ENCODE measurements at regions of chr20 and their contacts with region 1.

Region 1: GRCh38 chr20:51595058-51595532 is 52.6 kb upstream of the NFATC2 start:
- DNase-seq: peak; percentile 45 to 75 (median 68)
- ATAC-seq: peak; percentile 95
- H3K4me3 ChIP-seq: no peak overlapping the region
- H3K4me3 Mint-ChIP-seq: peak overlapping the region; percentile 53 to 76 (median 66)
- H3K27ac ChIP-seq: no peak overlapping the region
- H3K27ac Mint-ChIP-seq: peak overlapping the region; percentile 14 to 93 (median 69)
- H3K4me1 ChIP-seq: no peaks in the 10 kb centered on the region
- H3K4me1 Mint-ChIP-seq: peaks cover 8 to 32% (median 13%) of the 10 kb centered on the region in 7 donors
- H3K27me3 ChIP-seq: no peaks in the 10 kb centered on the region
- H3K27me3 Mint-ChIP-seq: peaks cover 0 to 9% (median 0%) of the 10 kb centered on the region in 5 donors

Region 2: DNA sequence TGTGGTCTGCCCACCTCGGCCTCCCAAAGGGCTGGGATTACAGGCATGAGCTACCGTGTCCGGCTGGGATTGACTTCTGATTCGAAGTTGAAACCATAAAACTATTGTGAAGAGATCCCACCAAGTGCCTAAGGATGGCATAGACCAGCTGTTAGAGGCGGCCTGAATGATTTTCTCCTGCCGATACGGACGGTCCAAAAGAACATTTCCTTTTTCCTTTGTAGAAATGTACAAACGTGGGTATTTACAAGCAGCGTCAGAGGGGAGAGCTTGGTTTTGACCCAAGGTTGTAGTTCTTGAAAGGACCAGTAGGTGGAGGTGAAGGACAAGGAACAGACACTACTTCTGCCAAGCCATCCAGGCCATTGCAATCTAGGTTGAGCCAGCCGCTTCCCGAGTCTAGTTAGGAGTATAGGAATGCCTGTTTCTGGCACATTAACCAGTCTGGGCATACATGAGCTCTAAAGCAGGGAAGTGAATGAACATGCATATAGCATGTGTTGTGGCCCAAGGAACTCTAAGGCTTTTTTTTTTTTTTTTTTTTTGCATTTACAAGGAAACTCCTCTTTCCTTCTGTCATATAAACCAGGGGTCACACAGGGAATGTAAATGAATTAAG is 607.4 kb before region 1 on chr20:
- CTCF ChIA-PET with region 1: interaction called, 5 read pairs
- POLR2A ChIA-PET with region 1: no interaction called
- intact Hi-C with region 1: loop called (anchors 1 kb)
- DNase-seq: peak; percentile 23 to 77 (median 66)
- ATAC-seq: peak; percentile 92
- H3K4me3 ChIP-seq: no peak overlapping the region
- H3K4me3 Mint-ChIP-seq: no peak overlapping the region
- H3K27ac ChIP-seq: no peak overlapping the region
- H3K27ac Mint-ChIP-seq: peak overlapping the region in 1 of 9 donors; percentile 43
- H3K4me1 ChIP-seq: no peaks in the 10 kb centered on the region
- H3K4me1 Mint-ChIP-seq: peaks cover 0 to 6% (median 0%) of the 10 kb centered on the region in 7 donors
- H3K27me3 ChIP-seq: peaks cover 0 to 3% of the 10 kb centered on the region in 2 donors
- H3K27me3 Mint-ChIP-seq: peaks cover 18 to 31% (median 25%) of the 10 kb centered on the region in 5 donors

Region 3: DNA sequence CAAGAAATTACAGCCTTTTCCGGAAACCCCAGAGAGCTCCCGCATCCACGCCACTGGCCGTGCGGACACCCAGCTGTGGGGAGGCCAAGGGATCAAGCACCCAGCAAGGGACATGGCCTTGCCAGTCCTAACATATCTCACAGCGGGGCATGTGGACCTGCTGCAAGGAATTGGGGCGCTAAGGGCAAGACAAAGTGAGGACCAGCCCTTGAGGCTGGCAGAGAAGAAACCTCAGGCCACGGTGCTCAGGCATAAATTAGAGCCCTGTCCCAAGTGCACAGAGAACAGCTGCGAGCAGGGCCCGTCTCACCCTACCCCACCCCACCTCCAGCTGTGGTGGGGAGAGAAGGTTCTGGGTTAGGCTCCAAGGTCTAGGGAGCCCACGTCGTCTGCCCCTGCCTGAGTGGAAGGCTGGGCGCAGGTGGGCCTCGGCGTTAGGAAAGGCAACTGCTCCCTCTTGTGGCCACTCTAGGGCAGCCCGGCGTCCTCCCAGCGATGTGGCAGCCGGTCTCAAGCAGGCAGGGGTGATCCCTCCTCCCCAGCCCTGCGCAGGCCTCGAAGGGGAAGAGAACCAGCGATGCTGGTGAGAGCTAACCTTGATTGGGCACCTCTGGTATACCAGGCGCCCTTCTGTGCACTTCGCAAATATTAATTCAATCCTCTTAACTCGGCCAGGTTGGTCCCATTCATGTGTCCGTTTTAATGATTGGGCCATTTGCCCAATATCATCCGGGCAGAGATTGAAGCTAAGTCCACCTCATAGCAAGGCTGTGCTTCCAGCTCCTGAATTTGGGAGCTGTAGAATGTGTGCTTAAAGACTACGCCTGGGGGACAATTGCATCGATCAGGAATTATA is 288.4 kb before region 1 on chr20:
- CTCF ChIA-PET with region 1: interaction called, 4 read pairs
- POLR2A ChIA-PET with region 1: no interaction called
- intact Hi-C with region 1: loop called in 1 of 2 experiments (anchors 1 kb)
- DNase-seq: peak; percentile 39 to 74 (median 53)
- ATAC-seq: peak; percentile 87
- H3K4me3 ChIP-seq: no peak overlapping the region
- H3K4me3 Mint-ChIP-seq: no peak overlapping the region
- H3K27ac ChIP-seq: no peak overlapping the region
- H3K27ac Mint-ChIP-seq: no peak overlapping the region
- H3K4me1 ChIP-seq: peaks cover 0 to 4% of the 10 kb centered on the region in 2 donors
- H3K4me1 Mint-ChIP-seq: peaks cover 0 to 5% (median 0%) of the 10 kb centered on the region in 7 donors
- H3K27me3 ChIP-seq: no peaks in the 10 kb centered on the region
- H3K27me3 Mint-ChIP-seq: peaks cover 8 to 25% (median 21%) of the 10 kb centered on the region in 5 donors

Region 4: GRCh38 chr20:51378171-51378929 is 216.7 kb before region 1 on chr20:
- CTCF ChIA-PET with region 1: interaction called, 24 read pairs
- POLR2A ChIA-PET with region 1: no interaction called
- intact Hi-C with region 1: no loop called
- DNase-seq: no peak
- ATAC-seq: no peak
- H3K4me3 ChIP-seq: no peak overlapping the region
- H3K4me3 Mint-ChIP-seq: peak overlapping the region in 1 of 10 donors; percentile 18
- H3K27ac ChIP-seq: no peak overlapping the region
- H3K27ac Mint-ChIP-seq: peak overlapping the region in 3 of 9 donors; percentile 3 to 37 (median 7)
- H3K4me1 ChIP-seq: no peaks in the 10 kb centered on the region
- H3K4me1 Mint-ChIP-seq: peaks cover 0 to 13% (median 5%) of the 10 kb centered on the region in 7 donors
- H3K27me3 ChIP-seq: no peaks in the 10 kb centered on the region
- H3K27me3 Mint-ChIP-seq: no peaks in the 10 kb centered on the region

Region 5: GRCh38 chr20:51500311-51500710 is 94.8 kb before region 1 on chr20:
- CTCF ChIA-PET with region 1: no interaction called
- POLR2A ChIA-PET with region 1: no interaction called
- intact Hi-C with region 1: loop called (anchors 1 to 10 kb)
- DNase-seq: peak in 8 of 9 donors; percentile 38 to 74 (median 54)
- ATAC-seq: peak; percentile 89
- H3K4me3 ChIP-seq: no peak overlapping the region
- H3K4me3 Mint-ChIP-seq: peak overlapping the region; percentile 21 to 99 (median 54)
- H3K27ac ChIP-seq: peak overlapping the region; percentile 58
- H3K27ac Mint-ChIP-seq: peak overlapping the region; percentile 65 to 100 (median 95)
- H3K4me1 ChIP-seq: peaks cover 59 to 60% of the 10 kb centered on the region in 2 donors
- H3K4me1 Mint-ChIP-seq: peaks cover 63 to 93% (median 87%) of the 10 kb centered on the region in 7 donors
- H3K27me3 ChIP-seq: no peaks in the 10 kb centered on the region
- H3K27me3 Mint-ChIP-seq: no peaks in the 10 kb centered on the region

Region 6: DNA sequence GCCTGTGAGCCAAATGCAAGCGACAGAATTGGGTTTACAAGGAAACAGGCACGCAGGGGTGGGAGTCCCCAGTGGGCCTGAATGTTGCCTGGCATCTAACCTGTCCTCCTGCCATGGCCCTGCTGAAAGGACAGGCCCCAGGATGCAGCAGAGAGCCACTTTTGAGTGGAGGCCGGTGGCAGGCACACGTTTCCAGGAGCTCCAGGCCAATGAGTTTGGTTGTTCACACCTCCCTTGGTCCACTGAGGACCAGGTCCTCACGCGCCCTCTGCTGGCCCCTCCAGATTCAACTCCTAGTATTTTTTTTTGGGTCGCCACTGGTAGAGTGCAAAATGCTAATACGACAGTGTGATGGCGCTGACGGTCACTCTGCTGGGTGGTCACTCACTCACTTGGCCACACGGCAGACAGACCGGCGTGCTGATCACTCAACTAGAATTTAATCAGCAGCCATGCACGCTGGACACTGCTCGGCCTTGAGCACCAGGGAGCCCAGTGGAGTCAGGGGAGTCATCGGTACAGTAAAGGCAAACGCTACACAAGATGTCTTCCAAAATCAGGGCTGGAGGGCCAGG is 29.1 kb after region 1 on chr20:
- CTCF ChIA-PET with region 1: interaction called, 3 read pairs
- POLR2A ChIA-PET with region 1: no interaction called
- intact Hi-C with region 1: loop called (anchors 1 to 2 kb)
- DNase-seq: peak; percentile 18 to 66 (median 42)
- ATAC-seq: peak; percentile 71
- H3K4me3 ChIP-seq: no peak overlapping the region
- H3K4me3 Mint-ChIP-seq: no peak overlapping the region
- H3K27ac ChIP-seq: no peak overlapping the region
- H3K27ac Mint-ChIP-seq: no peak overlapping the region
- H3K4me1 ChIP-seq: no peaks in the 10 kb centered on the region
- H3K4me1 Mint-ChIP-seq: peaks cover 0 to 5% (median 0%) of the 10 kb centered on the region in 7 donors
- H3K27me3 ChIP-seq: no peaks in the 10 kb centered on the region
- H3K27me3 Mint-ChIP-seq: no peaks in the 10 kb centered on the region

Region 7: GRCh38 chr20:51650685-51651134 is 55.6 kb after region 1 on chr20:
- CTCF ChIA-PET with region 1: no interaction called
- POLR2A ChIA-PET with region 1: no interaction called
- intact Hi-C with region 1: no loop called
- DNase-seq: no peak
- ATAC-seq: peak; percentile 91
- H3K4me3 ChIP-seq: no peak overlapping the region
- H3K4me3 Mint-ChIP-seq: no peak overlapping the region
- H3K27ac ChIP-seq: no peak overlapping the region
- H3K27ac Mint-ChIP-seq: no peak overlapping the region
- H3K4me1 ChIP-seq: no peaks in the 10 kb centered on the region
- H3K4me1 Mint-ChIP-seq: peaks cover 0 to 6% (median 0%) of the 10 kb centered on the region in 7 donors
- H3K27me3 ChIP-seq: no peaks in the 10 kb centered on the region
- H3K27me3 Mint-ChIP-seq: peaks cover 0 to 4% (median 0%) of the 10 kb centered on the region in 5 donors

Measured in naive thymus-derived CD4-positive, alpha-beta T cell (primary cell).